ENCODE measurements at regions of chr4 and their contacts with region 1.

Region 1: DNA sequence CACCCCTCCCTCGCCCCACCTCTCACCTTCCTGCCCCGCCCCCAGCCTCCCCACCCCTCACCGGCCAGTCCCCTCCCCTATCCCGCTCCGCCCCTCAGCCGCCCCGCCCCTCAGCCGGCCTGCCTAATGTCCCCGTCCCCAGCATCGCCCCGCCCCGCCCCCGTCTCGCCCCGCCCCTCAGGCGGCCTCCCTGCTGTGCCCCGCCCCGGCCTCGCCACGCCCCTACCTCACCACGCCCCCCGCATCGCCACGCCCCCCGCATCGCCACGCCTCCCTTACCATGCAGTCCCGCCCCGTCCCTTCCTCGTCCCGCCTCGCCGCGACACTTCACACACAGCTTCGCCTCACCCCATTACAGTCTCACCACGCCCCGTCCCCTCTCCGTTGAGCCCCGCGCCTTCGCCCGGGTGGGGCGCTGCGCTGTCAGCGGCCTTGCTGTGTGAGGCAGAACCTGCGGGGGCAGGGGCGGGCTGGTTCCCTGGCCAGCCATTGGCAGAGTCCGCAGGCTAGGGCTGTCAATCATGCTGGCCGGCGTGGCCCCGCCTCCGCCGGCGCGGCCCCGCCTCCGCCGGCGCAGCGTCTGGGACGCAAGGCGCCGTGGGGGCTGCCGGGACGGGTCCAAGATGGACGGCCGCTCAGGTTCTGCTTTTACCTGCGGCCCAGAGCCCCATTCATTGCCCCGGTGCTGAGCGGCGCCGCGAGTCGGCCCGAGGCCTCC is at the starts of genes HTT and HTT-AS:
- DNase-seq: peak; percentile 91 to 99 (median 96)
- ATAC-seq: peak; percentile 90
- H3K4me3 ChIP-seq: peak within 1 kb of the TSS; percentile 87
- H3K4me3 Mint-ChIP-seq: peak within 1 kb of the TSS; percentile 86 to 98 (median 90)
- H3K27ac ChIP-seq: peak within 1 kb of the TSS; percentile 89
- H3K27ac Mint-ChIP-seq: peak within 1 kb of the TSS; percentile 70 to 95 (median 93)
- H3K4me1 ChIP-seq: peaks cover 10 to 16% of the 10 kb centered on the region in 2 donors
- H3K4me1 Mint-ChIP-seq: peaks cover 17 to 35% (median 30%) of the 10 kb centered on the region in 7 donors
- H3K27me3 ChIP-seq: no peaks in the 10 kb centered on the region
- H3K27me3 Mint-ChIP-seq: no peaks in the 10 kb centered on the region
- total RNA-seq, gene HTT: 61.4 to 115 (median 72.5) TPM
- total RNA-seq, gene HTT-AS: not detected

Region 2: DNA sequence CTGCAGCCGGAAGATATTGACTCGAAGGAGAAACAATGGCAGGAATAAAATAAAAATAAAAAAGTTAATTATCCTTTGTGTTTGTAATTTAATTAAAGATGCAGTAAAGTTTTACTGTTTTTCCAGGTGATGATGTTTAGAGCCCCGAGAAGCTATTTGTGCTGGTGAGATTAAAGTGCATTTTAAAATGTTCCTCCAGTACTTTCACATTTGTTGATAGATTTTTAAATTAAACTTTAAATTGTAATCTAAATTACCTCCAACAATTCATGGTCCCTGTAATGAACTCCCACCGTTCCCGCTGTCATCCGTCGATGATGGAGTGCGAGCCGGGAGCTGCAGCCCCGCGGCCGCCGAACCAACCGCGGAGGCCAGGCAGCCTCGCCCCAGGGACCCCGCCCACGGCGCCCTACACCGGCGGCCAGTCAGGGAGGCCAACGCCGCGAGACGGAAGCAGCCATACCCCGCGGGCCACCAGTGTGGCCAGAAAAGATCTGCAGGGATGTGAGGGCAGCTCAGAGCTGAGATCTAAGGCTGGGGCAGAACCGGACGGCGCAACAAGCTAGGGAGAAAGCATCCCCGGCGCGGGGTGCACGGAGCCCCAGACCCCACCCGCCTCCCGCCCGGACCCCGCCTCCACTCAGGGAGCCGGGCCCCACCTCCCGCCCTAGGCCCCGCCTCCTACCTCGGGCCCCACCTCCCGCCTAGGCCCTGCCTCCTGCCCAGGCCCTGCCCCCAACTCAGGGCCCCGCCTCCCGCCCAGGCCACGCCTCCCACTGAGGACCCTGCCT is 1494.1 kb before region 1 on chr4:
- CTCF ChIA-PET with region 1: no interaction called
- POLR2A ChIA-PET with region 1: no interaction called
- intact Hi-C with region 1: loop called in 1 of 2 experiments (anchors 2 kb)
- DNase-seq: peak; percentile 85 to 97 (median 93)
- ATAC-seq: peak; percentile 90
- H3K4me3 ChIP-seq: peak overlapping the region; percentile 70
- H3K4me3 Mint-ChIP-seq: peak overlapping the region; percentile 73 to 87 (median 80)
- H3K27ac ChIP-seq: peak overlapping the region; percentile 73
- H3K27ac Mint-ChIP-seq: peak overlapping the region; percentile 18 to 79 (median 55)
- H3K4me1 ChIP-seq: peaks cover 0 to 5% of the 10 kb centered on the region in 2 donors
- H3K4me1 Mint-ChIP-seq: peaks cover 0 to 14% (median 10%) of the 10 kb centered on the region in 7 donors
- H3K27me3 ChIP-seq: no peaks in the 10 kb centered on the region
- H3K27me3 Mint-ChIP-seq: no peaks in the 10 kb centered on the region

Region 3: GRCh38 chr4:2241410-2242353 is 832.6 kb before region 1 on chr4 and contains the starts of genes HAUS3 and POLN:
- CTCF ChIA-PET with region 1: no interaction called
- POLR2A ChIA-PET with region 1: no interaction called
- intact Hi-C with region 1: loop called (anchors 1 kb)
- DNase-seq: peak; percentile 96 to 100 (median 99)
- ATAC-seq: peak; percentile 97
- H3K4me3 ChIP-seq: peak within 1 kb of the TSS; percentile 93
- H3K4me3 Mint-ChIP-seq: peak within 1 kb of the TSS; percentile 80 to 95 (median 91)
- H3K27ac ChIP-seq: peak within 1 kb of the TSS; percentile 89
- H3K27ac Mint-ChIP-seq: peak within 1 kb of the TSS; percentile 83 to 95 (median 90)
- H3K4me1 ChIP-seq: peaks cover 37 to 38% of the 10 kb centered on the region in 2 donors
- H3K4me1 Mint-ChIP-seq: peaks cover 48 to 65% (median 60%) of the 10 kb centered on the region in 7 donors
- H3K27me3 ChIP-seq: no peaks in the 10 kb centered on the region
- H3K27me3 Mint-ChIP-seq: peaks cover 0 to 6% (median 0%) of the 10 kb centered on the region in 5 donors
- total RNA-seq, gene HAUS3: 24.4 to 88.2 (median 34.1) TPM
- total RNA-seq, gene POLN: 2.4 to 5.4 (median 3.2) TPM

Region 4: DNA sequence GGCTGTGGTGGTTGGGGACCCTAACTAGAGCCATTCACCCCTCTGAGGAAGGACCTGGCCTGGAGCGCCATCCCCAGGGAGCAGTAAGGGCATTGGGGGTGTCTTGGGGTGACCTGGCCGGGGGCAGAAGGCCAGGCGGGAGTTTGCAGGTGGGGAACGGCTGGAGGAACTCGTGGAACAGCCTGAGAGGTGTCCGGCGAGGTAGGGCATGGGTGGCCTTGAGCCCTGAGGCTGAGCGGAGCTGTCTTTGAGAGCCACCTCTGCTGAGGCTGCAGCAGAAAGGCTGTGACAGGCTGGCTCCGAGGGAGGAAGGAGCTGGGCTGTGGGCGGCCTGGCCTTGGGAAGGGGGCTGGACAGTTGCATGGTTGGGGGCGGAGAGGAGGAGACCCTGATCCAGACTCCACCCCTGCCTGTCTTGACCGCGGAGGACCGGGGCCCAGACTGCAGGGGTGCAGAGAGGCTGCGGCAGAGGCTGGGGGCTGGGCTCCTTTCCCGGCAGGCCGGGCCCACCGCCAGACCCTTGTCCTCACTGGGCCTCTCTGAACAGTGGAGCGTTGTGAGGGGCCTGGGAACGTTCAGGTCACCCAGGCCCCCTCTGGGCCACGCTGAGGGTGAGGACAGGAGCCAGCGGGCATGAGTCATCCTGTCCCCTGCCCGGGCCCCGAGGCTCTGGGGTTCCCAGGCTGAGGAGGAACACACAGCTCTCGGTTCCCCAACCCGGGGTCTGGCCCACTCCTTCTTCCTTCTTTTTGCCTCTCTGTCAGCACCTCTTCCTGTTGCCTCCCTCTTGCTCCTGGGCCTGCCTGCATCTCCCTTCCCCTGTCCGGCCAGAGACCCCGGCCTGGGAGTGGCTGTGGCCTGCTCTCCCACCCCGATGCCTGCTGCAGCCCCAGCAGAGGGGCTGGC is 273.3 kb before region 1 on chr4:
- CTCF ChIA-PET with region 1: no interaction called
- POLR2A ChIA-PET with region 1: no interaction called
- intact Hi-C with region 1: loop called in 1 of 2 experiments (anchors 1 kb)
- DNase-seq: peak in 2 of 9 donors; percentile 7 to 37
- ATAC-seq: peak; percentile 70
- H3K4me3 ChIP-seq: no peak overlapping the region
- H3K4me3 Mint-ChIP-seq: peak overlapping the region in 6 of 10 donors; percentile 13 to 96 (median 40)
- H3K27ac ChIP-seq: no peak overlapping the region
- H3K27ac Mint-ChIP-seq: peak overlapping the region in 8 of 9 donors; percentile 17 to 79 (median 41)
- H3K4me1 ChIP-seq: peaks cover 30 to 45% of the 10 kb centered on the region in 2 donors
- H3K4me1 Mint-ChIP-seq: peaks cover 25 to 47% (median 42%) of the 10 kb centered on the region in 7 donors
- H3K27me3 ChIP-seq: no peaks in the 10 kb centered on the region
- H3K27me3 Mint-ChIP-seq: no peaks in the 10 kb centered on the region

Region 5: GRCh38 chr4:3047464-3048286 is 26.6 kb before region 1 on chr4:
- CTCF ChIA-PET with region 1: no interaction called
- POLR2A ChIA-PET with region 1: interaction called, 9 read pairs
- intact Hi-C with region 1: loop called (anchors 1 kb)
- DNase-seq: peak; percentile 40 to 75 (median 58)
- ATAC-seq: peak; percentile 79
- H3K4me3 ChIP-seq: peak overlapping the region; percentile 65
- H3K4me3 Mint-ChIP-seq: peak overlapping the region; percentile 62 to 92 (median 83)
- H3K27ac ChIP-seq: peak overlapping the region; percentile 61
- H3K27ac Mint-ChIP-seq: peak overlapping the region; percentile 79 to 90 (median 84)
- H3K4me1 ChIP-seq: peaks cover 16 to 18% of the 10 kb centered on the region in 2 donors
- H3K4me1 Mint-ChIP-seq: peaks cover 17 to 45% (median 35%) of the 10 kb centered on the region in 7 donors
- H3K27me3 ChIP-seq: no peaks in the 10 kb centered on the region
- H3K27me3 Mint-ChIP-seq: peaks cover 0 to 17% (median 0%) of the 10 kb centered on the region in 5 donors

Region 6: GRCh38 chr4:3531879-3532713 is 457.9 kb after region 1 on chr4 and contains the start of gene LRPAP1:
- CTCF ChIA-PET with region 1: no interaction called
- POLR2A ChIA-PET with region 1: no interaction called
- intact Hi-C with region 1: loop called in 1 of 2 experiments (anchors 1 kb)
- DNase-seq: peak; percentile 69 to 92 (median 78)
- ATAC-seq: peak; percentile 96
- H3K4me3 ChIP-seq: peak within 1 kb of the TSS; percentile 83
- H3K4me3 Mint-ChIP-seq: peak within 1 kb of the TSS; percentile 95 to 100 (median 99)
- H3K27ac ChIP-seq: peak within 1 kb of the TSS; percentile 84
- H3K27ac Mint-ChIP-seq: peak within 1 kb of the TSS; percentile 91 to 99 (median 95)
- H3K4me1 ChIP-seq: peaks cover 16 to 32% of the 10 kb centered on the region in 2 donors
- H3K4me1 Mint-ChIP-seq: peaks cover 18 to 50% (median 39%) of the 10 kb centered on the region in 7 donors
- H3K27me3 ChIP-seq: no peaks in the 10 kb centered on the region
- H3K27me3 Mint-ChIP-seq: peaks cover 5 to 10% (median 6%) of the 10 kb centered on the region in 5 donors
- total RNA-seq, gene LRPAP1: 65.2 to 88.6 (median 79.4) TPM

Measured in naive thymus-derived CD4-positive, alpha-beta T cell (primary cell).